Right ventricle myocardium superior (tissue), 1 donor: ENCODE measurements at regions of chr9 and their contacts with region 1.

Region 1: GRCh38 chr9:112233768-112234167 is 58.7 kb upstream of the SUSD1 start:
- DNase-seq: no peak
- ATAC-seq: no peak

Region 2: GRCh38 chr9:112315331-112316257 is 81.8 kb after region 1 on chr9:
- intact Hi-C with region 1: loop called (anchors 10 kb)
- DNase-seq: no peak
- ATAC-seq: no peak

Region 3: DNA sequence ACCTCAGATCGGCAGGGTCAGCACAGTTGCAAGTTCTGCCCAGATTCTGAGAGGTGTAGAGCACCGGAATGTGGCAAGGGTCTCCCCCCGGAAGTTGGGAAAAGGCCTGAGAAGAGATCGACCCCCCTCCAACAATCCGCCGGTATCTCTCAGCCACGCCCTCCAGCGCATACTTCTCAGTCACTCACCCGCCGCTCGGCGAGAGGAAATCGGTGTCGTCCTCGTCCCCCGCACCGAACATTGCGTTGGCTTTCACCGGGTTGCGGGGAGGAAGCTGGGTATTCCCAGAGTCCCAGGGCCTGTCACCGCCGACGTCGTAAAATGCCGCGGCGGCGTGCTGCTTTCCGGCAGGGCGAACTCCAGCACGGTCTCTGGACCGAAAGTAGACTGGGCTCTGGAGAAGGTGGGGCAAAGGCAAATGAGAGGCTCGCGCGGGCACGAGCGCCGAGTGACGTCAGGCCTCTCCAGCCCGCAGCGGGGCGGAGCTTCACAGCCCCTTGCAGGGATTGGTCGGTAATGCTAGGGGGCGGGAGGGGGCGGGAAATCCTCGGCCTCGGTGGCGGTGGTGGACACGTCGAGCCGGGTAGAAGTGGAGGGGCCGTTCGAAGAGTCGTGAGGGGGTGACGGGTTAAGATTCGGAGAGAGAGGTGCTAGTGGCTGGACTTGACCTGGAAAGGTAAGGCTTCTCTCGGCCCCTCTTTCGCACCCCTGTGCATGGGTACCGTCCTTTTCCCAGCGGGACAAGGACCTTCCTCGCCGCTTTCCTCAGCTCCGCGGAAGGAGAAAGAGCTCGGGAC is 987.4 kb after region 1 on chr9 and contains the starts of genes FKBP15 and SLC31A1:
- intact Hi-C with region 1: no loop called
- DNase-seq: peak; percentile 98
- ATAC-seq: peak; percentile 99
- total RNA-seq, gene FKBP15: 18.1 TPM
- total RNA-seq, gene SLC31A1: 9.4 TPM